AG04449 (cell line): ENCODE measurements at regions of chr9 and their contacts with region 1.

Region 1: GRCh38 chr9:35553670-35554543 is 51.2 kb upstream of the TESK1 start:
- DNase-seq: no peak
- H3K4me3 ChIP-seq: no peak overlapping the region
- CTCF ChIP-seq: peak; percentile 68

Region 2: GRCh38 chr9:35481347-35481975 is 72.4 kb before region 1 on chr9:
- CTCF ChIA-PET with region 1: interaction called, 170 read pairs
- POLR2A ChIA-PET with region 1: no interaction called
- DNase-seq: no peak
- H3K4me3 ChIP-seq: no peak overlapping the region
- CTCF ChIP-seq: peak; percentile 74

Region 3: GRCh38 chr9:35495984-35496383 is 57.9 kb before region 1 on chr9:
- CTCF ChIA-PET with region 1: interaction called, 50 read pairs
- POLR2A ChIA-PET with region 1: no interaction called
- DNase-seq: no peak
- H3K4me3 ChIP-seq: no peak overlapping the region
- CTCF ChIP-seq: no peak

Region 4: DNA sequence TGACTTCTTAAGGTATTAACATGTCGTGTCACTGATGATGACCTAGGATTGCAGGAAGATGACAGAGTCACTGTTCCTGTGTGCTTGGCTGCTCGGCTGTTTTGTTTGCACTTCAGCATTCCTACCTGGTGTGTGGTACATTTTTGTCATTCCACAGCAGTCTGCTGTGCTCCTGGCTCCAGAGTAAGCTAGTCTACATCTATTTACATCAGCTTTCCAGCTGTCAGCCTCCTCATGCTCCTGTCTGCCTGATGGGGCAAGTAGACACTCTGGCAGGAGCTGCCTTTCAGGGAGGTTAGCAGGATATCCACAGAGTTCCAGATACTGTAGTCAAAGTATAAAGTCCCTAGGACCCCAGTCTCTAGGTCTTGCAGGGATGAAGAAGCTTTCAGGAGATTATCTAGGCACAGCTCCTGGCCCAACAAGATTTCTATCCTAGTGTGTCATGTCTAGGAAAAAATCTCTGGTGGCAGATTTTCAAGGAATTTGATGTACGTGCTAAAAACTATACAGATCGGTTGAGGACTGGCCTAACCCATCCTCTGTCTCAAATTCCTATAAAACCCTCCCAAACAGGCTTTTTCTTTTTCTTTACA is 35.6 kb before region 1 on chr9:
- CTCF ChIA-PET with region 1: interaction called, 83 read pairs
- POLR2A ChIA-PET with region 1: interaction called, 10 read pairs
- DNase-seq: peak; percentile 81
- H3K4me3 ChIP-seq: no peak overlapping the region
- CTCF ChIP-seq: no peak

Region 5: GRCh38 chr9:35538361-35539234 is 15.3 kb before region 1 on chr9:
- CTCF ChIA-PET with region 1: interaction called, 64 read pairs
- POLR2A ChIA-PET with region 1: interaction called, 3 read pairs
- DNase-seq: no peak
- H3K4me3 ChIP-seq: peak overlapping the region; percentile 67
- CTCF ChIP-seq: no peak